Natural killer cell (primary cell): ENCODE measurements at regions of chr14 and their contacts with region 1.

Region 1: GRCh38 chr14:24036169-24036962 is 15.4 kb upstream of the CARMIL3 start:
- DNase-seq: peak; percentile 49 to 78
- ATAC-seq: peak; percentile 82 to 90 (median 85)
- H3K4me3 ChIP-seq: peak overlapping the region; percentile 62
- H3K4me3 Mint-ChIP-seq: peak overlapping the region; percentile 90
- H3K27ac ChIP-seq: peak overlapping the region; percentile 65
- H3K27ac Mint-ChIP-seq: peak overlapping the region; percentile 69 to 95
- H3K4me1 ChIP-seq: peaks cover 4% of the 10 kb centered on the region
- H3K4me1 Mint-ChIP-seq: peaks cover 9 to 19% of the 10 kb centered on the region in 2 donors
- H3K27me3 ChIP-seq: no peaks in the 10 kb centered on the region
- H3K27me3 Mint-ChIP-seq: no peaks in the 10 kb centered on the region
- CTCF ChIP-seq: peak; percentile 59

Region 2: DNA sequence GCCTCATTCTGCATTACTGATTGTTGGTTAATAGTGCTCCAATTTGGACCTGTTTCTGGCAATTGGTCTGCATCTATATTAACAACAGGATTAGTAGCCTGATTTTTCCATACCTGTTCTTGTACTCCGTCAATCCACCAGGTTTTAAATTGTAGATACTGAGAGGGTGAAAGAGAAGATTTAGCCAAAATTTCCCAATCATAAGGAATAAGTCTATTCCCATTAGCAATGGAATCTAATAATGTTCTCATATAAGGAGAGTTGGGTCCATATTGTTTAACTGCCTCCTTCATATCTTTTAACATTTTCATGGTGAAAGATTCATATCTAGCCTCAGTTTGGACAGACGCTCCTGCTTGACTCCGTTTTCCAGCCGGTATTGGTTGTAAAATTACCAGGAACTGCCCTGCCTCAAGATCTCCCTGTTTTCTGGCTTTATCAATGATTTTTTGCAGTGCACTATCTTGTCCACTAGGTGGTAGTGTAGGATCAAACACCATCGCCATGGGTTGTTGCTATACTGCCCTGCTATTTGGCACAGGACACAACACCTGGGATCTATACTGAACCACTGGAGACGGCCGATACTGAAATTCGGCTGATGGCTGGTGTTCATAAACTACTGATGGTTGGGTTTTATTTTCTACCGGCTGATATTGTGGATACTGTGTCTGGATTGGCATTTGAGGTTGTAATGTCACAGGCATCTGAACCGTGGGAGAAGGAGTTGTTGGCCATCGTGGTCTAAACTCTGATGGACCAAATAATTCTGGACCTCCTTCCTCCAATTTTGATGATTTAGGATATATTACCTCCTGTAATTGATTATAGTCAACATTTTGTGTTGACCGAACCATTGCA is 22.5 kb before region 1 on chr14:
- intact Hi-C with region 1: loop called (anchors 1 kb)
- DNase-seq: peak; percentile 25 to 87
- ATAC-seq: peak; percentile 93 to 98 (median 97)
- H3K4me3 ChIP-seq: no peak overlapping the region
- H3K4me3 Mint-ChIP-seq: no peak overlapping the region
- H3K27ac ChIP-seq: no peak overlapping the region
- H3K27ac Mint-ChIP-seq: no peak overlapping the region
- H3K4me1 ChIP-seq: peaks cover 5% of the 10 kb centered on the region
- H3K4me1 Mint-ChIP-seq: peaks cover 0 to 5% of the 10 kb centered on the region in 2 donors
- H3K27me3 ChIP-seq: no peaks in the 10 kb centered on the region
- H3K27me3 Mint-ChIP-seq: peaks cover 0 to 4% of the 10 kb centered on the region in 2 donors
- CTCF ChIP-seq: peak; percentile 89

Region 3: DNA sequence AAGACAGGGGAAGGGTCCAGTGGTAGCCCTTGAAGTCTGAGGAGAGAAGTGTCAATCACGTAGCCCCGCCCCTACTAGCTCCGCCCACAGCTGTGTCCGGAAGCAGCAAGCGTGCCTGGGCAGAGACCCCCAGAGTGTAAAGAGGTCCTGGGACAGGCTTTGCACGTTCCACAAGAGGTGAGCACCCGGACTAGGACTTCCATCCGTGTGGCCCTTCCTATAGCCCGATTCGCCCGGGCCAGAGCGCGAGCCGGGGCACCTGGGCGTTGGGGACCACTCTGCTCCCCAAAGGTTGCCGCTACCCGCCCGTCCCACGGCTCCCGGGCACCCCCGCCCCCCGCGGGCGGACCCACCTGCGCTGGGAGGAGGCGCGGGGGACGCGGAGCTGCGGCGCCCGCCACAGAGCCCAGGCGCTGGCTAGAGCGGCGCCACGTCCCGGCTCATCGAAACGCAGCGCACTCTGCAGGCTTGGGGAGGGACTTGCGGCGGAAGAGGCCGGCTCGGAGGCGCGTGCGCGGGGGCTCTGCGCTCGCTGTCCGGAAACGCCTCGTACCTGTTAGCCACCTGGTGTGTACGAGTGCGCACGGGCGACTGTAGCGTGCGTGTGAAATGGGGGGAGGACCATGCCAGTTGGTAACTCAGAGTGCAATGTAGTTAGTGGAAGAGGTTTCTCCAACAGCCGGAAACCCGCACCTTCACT is 234.9 kb after region 1 on chr14 and contains the start of gene RABGGTA:
- intact Hi-C with region 1: no loop called
- DNase-seq: peak; percentile 92 to 99
- ATAC-seq: peak; percentile 84 to 94 (median 87)
- H3K4me3 ChIP-seq: peak within 1 kb of the TSS; percentile 88
- H3K4me3 Mint-ChIP-seq: peak within 1 kb of the TSS; percentile 94
- H3K27ac ChIP-seq: peak within 1 kb of the TSS; percentile 99
- H3K27ac Mint-ChIP-seq: peak within 1 kb of the TSS; percentile 91 to 92
- H3K4me1 ChIP-seq: peaks cover 30% of the 10 kb centered on the region
- H3K4me1 Mint-ChIP-seq: peaks cover 25 to 30% of the 10 kb centered on the region in 2 donors
- H3K27me3 ChIP-seq: no peaks in the 10 kb centered on the region
- H3K27me3 Mint-ChIP-seq: no peaks in the 10 kb centered on the region
- CTCF ChIP-seq: peak; percentile 63
- total RNA-seq, gene RABGGTA: 72.9 to 95.1 (median 88.5) TPM